Panc1 (cell line): ENCODE measurements at regions of chr2 and their contacts with region 1.

Region 1: GRCh38 chr2:200735061-200735460 is 76.6 kb upstream of the BZW1 start:
- DNase-seq: no peak
- ATAC-seq: no peak
- H3K4me3 ChIP-seq: no peak overlapping the region
- H3K27ac ChIP-seq: no peak overlapping the region
- H3K4me1 ChIP-seq: no peaks in the 10 kb centered on the region
- H3K27me3 ChIP-seq: no peaks in the 10 kb centered on the region; the same call in 1 of the 2 replicates
- CTCF ChIP-seq: no peak

Region 2: GRCh38 chr2:200419325-200419724 is 315.7 kb before region 1 on chr2:
- CTCF ChIA-PET with region 1: interaction called, 10 read pairs
- POLR2A ChIA-PET with region 1: no interaction called
- in situ Hi-C with region 1: no loop called
- intact Hi-C with region 1: no loop called
- DNase-seq: no peak
- ATAC-seq: no peak
- H3K4me3 ChIP-seq: no peak overlapping the region
- H3K27ac ChIP-seq: peak overlapping the region; percentile 58
- H3K4me1 ChIP-seq: peaks cover 18% of the 10 kb centered on the region
- H3K27me3 ChIP-seq: no peaks in the 10 kb centered on the region
- CTCF ChIP-seq: no peak

Region 3: GRCh38 chr2:200756618-200757321 is 21.7 kb after region 1 on chr2:
- CTCF ChIA-PET with region 1: no interaction called
- POLR2A ChIA-PET with region 1: no interaction called
- in situ Hi-C with region 1: no loop called
- intact Hi-C with region 1: no loop called
- DNase-seq: no peak
- ATAC-seq: peak; percentile 88
- H3K4me3 ChIP-seq: no peak overlapping the region
- H3K27ac ChIP-seq: no peak overlapping the region
- H3K4me1 ChIP-seq: 0 out of 2 replicates have a peak, but pooled peaks cover 3% of the 10 kb centered on the region
- H3K27me3 ChIP-seq: no peaks in the 10 kb centered on the region
- CTCF ChIP-seq: no peak